Transverse colon (tissue), 4 donors: ENCODE measurements at regions of chr11 and their contacts with region 1.

Region 1: DNA sequence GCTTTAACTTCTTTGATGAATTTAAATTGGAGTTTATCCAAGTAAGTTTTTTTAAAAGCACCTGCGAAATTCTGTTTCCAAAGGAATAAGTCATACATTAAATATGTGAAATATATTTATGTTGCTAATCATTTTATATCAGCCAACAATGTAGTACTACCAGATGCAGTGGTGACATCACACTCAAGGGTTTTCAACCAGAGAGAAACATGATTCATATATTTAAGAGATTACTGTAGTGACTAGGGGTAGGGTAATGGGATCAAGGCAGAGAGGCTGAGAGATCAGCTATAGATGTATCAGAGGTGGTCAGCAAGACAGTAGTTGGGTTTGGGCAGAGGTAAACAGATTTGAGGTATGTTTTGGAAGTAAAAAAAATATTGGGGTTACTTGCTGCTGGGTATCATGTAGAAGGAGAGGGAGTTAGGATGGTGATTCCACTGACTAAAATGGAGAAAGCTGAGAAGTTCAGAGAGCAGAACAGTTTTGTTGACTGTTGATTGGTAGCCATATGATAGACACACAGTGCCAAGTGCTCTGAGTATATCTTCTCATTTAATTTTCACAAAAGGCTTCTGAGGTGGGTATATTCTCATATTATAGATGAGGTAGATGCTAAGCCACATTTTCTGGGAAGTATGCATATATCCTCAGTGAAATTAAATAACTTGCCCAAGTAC is 39.4 kb downstream of the CEP57 start:
- DNase-seq: no peak
- H3K4me3 ChIP-seq: no peak overlapping the region
- H3K27ac ChIP-seq: no peak overlapping the region
- H3K4me1 ChIP-seq: no peaks in the 10 kb centered on the region
- H3K27me3 ChIP-seq: no peaks in the 10 kb centered on the region
- CTCF ChIP-seq: no peak
- EP300 ChIP-seq: no peak
- POLR2A ChIP-seq: no peak

Region 2: GRCh38 chr11:95790123-95790932 is 39.4 kb before region 1 on chr11 and contains the start of gene CEP57:
- in situ Hi-C with region 1: no loop called
- intact Hi-C with region 1: loop called (anchors 1 kb)
- DNase-seq: peak; percentile 97
- H3K4me3 ChIP-seq: peak within 1 kb of the TSS; percentile 67 to 97 (median 92)
- H3K27ac ChIP-seq: peak within 1 kb of the TSS; percentile 92 to 99 (median 96)
- H3K4me1 ChIP-seq: peaks cover 14 to 30% (median 22%) of the 10 kb centered on the region in 4 donors
- H3K27me3 ChIP-seq: no peaks in the 10 kb centered on the region
- CTCF ChIP-seq: peak in 1 of 5 experiments; percentile 14
- EP300 ChIP-seq: no peak
- POLR2A ChIP-seq: peak; percentile 55
- total RNA-seq, gene CEP57: 22.4 to 61.7 (median 40.2) TPM